ENCODE measurements at regions of chr12 and their contacts with region 1.

Region 1: GRCh38 chr12:55619354-55620138 is 17.1 kb upstream of the OR10P1 start:
- DNase-seq: peak in 20 of 42 donors; percentile 6 to 84 (median 47)

Region 2: GRCh38 chr12:55188974-55189556 is 430.5 kb before region 1 on chr12:
- intact Hi-C with region 1: loop called (anchors 5 kb)
- DNase-seq: peak in 25 of 42 donors; percentile 8 to 81 (median 48)

Region 3: GRCh38 chr12:55780685-55781084 is 161.1 kb after region 1 on chr12:
- intact Hi-C with region 1: no loop called
- DNase-seq: no peak